IMR-90 (cell line): ENCODE measurements at regions of chr14 and their contacts with region 1.

Region 1: GRCh38 chr14:60455875-60456274 is 30.0 kb downstream of the C14orf39 start:
- DNase-seq: no peak
- ATAC-seq: no peak
- H3K4me3 ChIP-seq: no peak overlapping the region
- H3K27ac ChIP-seq: no peak overlapping the region
- H3K4me1 ChIP-seq: no peaks in the 10 kb centered on the region
- H3K27me3 ChIP-seq: no peaks in the 10 kb centered on the region
- CTCF ChIP-seq: no peak
- POLR2A ChIP-seq: no peak
- RAD21 ChIP-seq: no peak

Region 2: DNA sequence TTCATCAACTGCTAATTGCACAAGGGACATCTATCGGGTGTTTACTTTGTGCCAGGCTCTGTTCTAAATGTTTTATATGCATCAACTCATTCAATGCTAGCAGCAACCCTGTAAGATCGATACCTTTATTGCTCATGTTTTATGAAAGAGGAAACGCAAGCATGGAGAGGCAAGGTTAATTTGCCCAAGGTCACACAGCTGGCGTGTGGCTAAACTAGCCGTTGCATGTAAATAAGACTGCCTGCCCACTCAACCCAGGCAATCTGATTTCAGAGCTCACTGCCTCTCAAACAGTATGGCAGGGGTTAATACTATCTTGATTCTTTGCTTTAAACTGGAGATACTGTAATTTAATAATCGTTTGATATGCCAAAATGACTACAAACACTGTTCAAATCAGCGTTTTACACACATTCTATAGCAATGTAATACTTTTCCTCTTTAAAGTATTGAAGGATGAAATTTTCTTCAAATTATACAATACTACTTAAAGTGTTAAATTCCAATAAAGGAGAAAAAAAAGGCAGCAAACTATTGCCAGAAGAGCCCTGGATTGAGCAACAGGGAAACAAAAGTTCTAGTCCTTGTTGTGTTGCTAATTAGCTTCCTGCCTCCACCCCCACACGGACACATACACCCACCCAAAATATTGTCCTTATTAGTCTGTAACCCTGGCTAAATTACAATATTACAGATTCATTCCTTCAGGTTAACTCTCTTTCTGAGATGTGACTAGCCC is 251.6 kb before region 1 on chr14:
- CTCF ChIA-PET with region 1: no interaction called
- POLR2A ChIA-PET with region 1: no interaction called
- dilution Hi-C with region 1: no loop called
- in situ Hi-C with region 1: no loop called
- intact Hi-C with region 1: loop called (anchors 10 kb)
- DNase-seq: no peak
- ATAC-seq: no peak
- H3K4me3 ChIP-seq: no peak overlapping the region
- H3K27ac ChIP-seq: no peak overlapping the region
- H3K4me1 ChIP-seq: no peaks in the 10 kb centered on the region
- H3K27me3 ChIP-seq: peaks cover 10% of the 10 kb centered on the region
- CTCF ChIP-seq: no peak
- POLR2A ChIP-seq: no peak
- RAD21 ChIP-seq: no peak

Region 3: GRCh38 chr14:60922050-60922449 is 466.2 kb after region 1 on chr14:
- CTCF ChIA-PET with region 1: no interaction called
- POLR2A ChIA-PET with region 1: no interaction called
- dilution Hi-C with region 1: no loop called
- in situ Hi-C with region 1: no loop called
- intact Hi-C with region 1: no loop called
- DNase-seq: peak; percentile 62
- ATAC-seq: no peak
- H3K4me3 ChIP-seq: no peak overlapping the region
- H3K27ac ChIP-seq: no peak overlapping the region
- H3K4me1 ChIP-seq: no peaks in the 10 kb centered on the region
- H3K27me3 ChIP-seq: no peaks in the 10 kb centered on the region
- CTCF ChIP-seq: no peak
- POLR2A ChIP-seq: no peak
- RAD21 ChIP-seq: no peak